Activated CD4-positive, alpha-beta memory T cell treated with anti-CD3 and anti-CD28 coated beads for 36 hours (primary cell): ENCODE measurements at regions of chr15 and their contacts with region 1.

Region 1: DNA sequence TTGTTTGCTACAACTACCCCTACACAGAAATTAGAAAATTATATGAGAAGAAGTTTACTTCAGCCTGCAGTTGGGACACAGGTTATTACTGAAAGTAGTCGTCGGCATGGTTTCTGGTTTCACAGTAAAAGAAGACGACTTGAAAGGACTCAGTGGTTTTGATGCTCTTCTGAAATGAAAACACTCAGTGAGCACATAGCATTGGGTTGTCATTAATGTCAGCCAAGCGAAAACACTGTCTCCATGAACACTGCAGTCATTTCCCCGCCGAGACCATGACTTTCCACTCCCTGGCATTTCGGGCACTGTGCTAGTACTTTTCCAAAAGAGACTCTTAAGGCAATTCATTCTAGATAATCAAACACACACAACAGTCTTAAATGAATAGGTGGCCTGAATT is 69.2 kb upstream of the ICE2 start:
- DNase-seq: peak; percentile 88
- H3K4me3 Mint-ChIP-seq: peak overlapping the region; percentile 60
- H3K27ac Mint-ChIP-seq: peak overlapping the region; percentile 88
- H3K4me1 Mint-ChIP-seq: peaks cover 98% of the 10 kb centered on the region
- H3K27me3 Mint-ChIP-seq: no peaks in the 10 kb centered on the region

Region 2: DNA sequence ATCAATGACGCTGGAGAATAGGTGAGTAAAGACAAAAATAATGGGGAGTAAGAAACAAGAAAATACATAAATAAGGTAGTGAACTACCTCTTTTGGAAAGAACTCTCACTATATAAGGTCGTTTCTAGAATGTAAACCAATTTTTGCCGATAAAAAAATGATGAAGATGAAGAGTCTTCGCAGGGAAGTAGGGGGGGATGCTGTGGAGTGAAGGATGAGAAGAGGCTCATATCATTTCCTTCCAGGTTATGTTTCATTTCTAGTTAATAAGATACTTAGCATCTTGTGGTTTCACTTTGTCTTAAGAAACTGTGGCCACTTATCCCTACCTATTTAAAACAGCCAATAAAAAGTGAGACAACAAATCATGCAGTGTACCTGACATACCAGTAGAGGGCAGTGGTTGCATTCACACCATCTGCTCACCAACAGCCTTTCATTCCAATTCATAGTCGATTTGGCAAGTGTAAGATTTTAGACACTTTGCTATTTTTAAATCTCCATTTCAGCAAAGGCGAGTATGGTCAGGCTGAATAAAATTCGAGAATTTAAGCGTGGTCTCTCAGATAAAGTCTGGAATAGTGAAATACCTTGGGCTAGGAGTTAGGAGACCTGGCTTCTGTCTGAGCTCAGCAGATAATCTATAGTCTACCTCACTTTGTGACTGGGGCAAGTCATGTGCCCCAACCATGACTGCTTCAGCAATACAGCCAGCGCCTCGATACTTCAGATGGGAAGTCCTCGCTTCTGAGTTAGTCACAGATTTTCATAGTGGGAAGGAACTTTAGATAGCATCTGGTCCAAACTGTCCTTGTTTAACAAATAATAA is 40.3 kb before region 1 on chr15:
- CTCF ChIA-PET with region 1: interaction called, 20 read pairs
- POLR2A ChIA-PET with region 1: interaction called, 3 read pairs
- intact Hi-C with region 1: loop called (anchors 1 kb)
- DNase-seq: peak; percentile 56
- H3K4me3 Mint-ChIP-seq: no peak overlapping the region
- H3K27ac Mint-ChIP-seq: peak overlapping the region; percentile 69
- H3K4me1 Mint-ChIP-seq: peaks cover 56% of the 10 kb centered on the region
- H3K27me3 Mint-ChIP-seq: no peaks in the 10 kb centered on the region

Region 3: DNA sequence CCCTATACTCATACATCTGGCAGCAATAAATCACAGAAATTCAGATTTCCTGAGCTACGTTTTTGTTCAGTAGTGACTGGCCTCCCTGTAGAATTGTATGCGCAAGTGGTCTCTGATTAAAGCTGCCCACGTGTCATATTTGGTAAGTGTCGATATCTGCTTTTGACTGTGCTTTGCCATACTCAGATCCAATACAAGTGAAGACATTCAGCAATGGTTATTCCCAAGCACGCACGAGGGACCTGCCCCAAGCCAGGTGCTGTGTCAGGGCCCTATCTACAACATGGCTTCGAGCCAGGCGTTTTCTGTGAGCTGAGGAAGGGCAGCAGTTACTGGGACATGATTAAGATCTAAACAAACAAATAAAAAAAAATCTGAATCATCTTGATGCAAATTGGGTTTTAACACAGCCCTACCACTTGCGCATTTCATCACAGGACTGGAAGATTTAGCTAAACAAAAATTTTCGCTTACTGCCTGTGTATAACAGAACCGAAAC is 21.9 kb before region 1 on chr15:
- CTCF ChIA-PET with region 1: interaction called, 82 read pairs
- POLR2A ChIA-PET with region 1: interaction called, 21 read pairs
- intact Hi-C with region 1: loop called (anchors 1 kb)
- DNase-seq: peak; percentile 47
- H3K4me3 Mint-ChIP-seq: no peak overlapping the region
- H3K27ac Mint-ChIP-seq: peak overlapping the region; percentile 75
- H3K4me1 Mint-ChIP-seq: peaks cover 73% of the 10 kb centered on the region
- H3K27me3 Mint-ChIP-seq: no peaks in the 10 kb centered on the region

Region 4: GRCh38 chr15:60568301-60568742 is 20.2 kb after region 1 on chr15:
- CTCF ChIA-PET with region 1: interaction called, 12 read pairs
- POLR2A ChIA-PET with region 1: interaction called, 45 read pairs
- intact Hi-C with region 1: loop called (anchors 1 kb)
- DNase-seq: no peak
- H3K4me3 Mint-ChIP-seq: peak overlapping the region; percentile 35
- H3K27ac Mint-ChIP-seq: peak overlapping the region; percentile 85
- H3K4me1 Mint-ChIP-seq: peaks cover 91% of the 10 kb centered on the region
- H3K27me3 Mint-ChIP-seq: no peaks in the 10 kb centered on the region

Region 5: GRCh38 chr15:60580650-60581376 is 32.7 kb after region 1 on chr15:
- CTCF ChIA-PET with region 1: interaction called, 88 read pairs
- POLR2A ChIA-PET with region 1: interaction called, 45 read pairs
- intact Hi-C with region 1: loop called (anchors 1 kb)
- DNase-seq: peak; percentile 66
- H3K4me3 Mint-ChIP-seq: peak overlapping the region; percentile 70
- H3K27ac Mint-ChIP-seq: peak overlapping the region; percentile 91
- H3K4me1 Mint-ChIP-seq: peaks cover 91% of the 10 kb centered on the region
- H3K27me3 Mint-ChIP-seq: no peaks in the 10 kb centered on the region